GM12878 (cell line): ENCODE measurements at regions of chr18 and their contacts with region 1.

Region 1: GRCh38 chr18:27298214-27298804 is 113.2 kb upstream of the CHST9 start:
- DNase-seq: no peak
- ATAC-seq: no peak
- H3K4me3 ChIP-seq: no peak overlapping the region
- H3K27ac ChIP-seq: no peak overlapping the region
- H3K4me1 ChIP-seq: no peaks in the 10 kb centered on the region
- H3K27me3 ChIP-seq: no peaks in the 10 kb centered on the region
- CTCF ChIP-seq: peak in 1 of 3 experiments; percentile 29; a peak in 1 of 6 replicates
- EP300 ChIP-seq: no peak
- POLR2A ChIP-seq: no peak
- RAD21 ChIP-seq: peak; percentile 36

Region 2: DNA sequence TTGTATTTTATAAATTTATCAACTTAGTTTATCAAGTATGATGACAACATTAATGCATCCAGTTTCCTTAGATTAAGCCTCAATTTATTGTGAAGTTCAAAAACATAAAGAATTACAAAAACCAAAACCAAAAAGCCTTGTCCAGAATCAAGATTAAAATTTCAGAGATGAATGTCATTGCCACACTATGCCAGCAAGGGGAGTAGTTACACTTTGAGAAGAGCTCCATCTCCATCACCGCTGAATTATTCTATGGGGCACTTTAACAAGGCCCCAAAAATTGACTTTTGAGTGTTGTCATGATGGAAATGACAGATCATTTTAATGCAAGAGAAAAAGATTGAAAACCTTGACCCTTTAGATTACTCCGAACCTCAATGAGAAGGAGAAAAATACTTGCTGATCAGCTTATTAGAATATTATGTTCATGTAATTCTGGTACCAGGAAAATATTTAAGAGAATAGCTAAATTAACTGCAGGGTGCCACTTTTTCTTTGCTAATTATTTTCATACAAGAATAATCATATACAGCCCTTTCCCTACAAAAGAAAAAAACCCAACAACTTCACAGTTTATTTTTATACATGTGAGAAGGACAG is 280.3 kb before region 1 on chr18:
- CTCF ChIA-PET with region 1: interaction called, 7 read pairs
- POLR2A ChIA-PET with region 1: no interaction called
- RAD21 ChIA-PET with region 1: interaction called, 6 read pairs
- SMC1A ChIA-PET with region 1: interaction called, 3 read pairs
- in situ Hi-C with region 1: no loop called
- intact Hi-C with region 1: loop called (anchors 5 kb)
- DNase-seq: no peak
- ATAC-seq: peak; percentile 66
- H3K4me3 ChIP-seq: no peak overlapping the region
- H3K27ac ChIP-seq: no peak overlapping the region
- H3K4me1 ChIP-seq: no peaks in the 10 kb centered on the region
- H3K27me3 ChIP-seq: no peaks in the 10 kb centered on the region
- CTCF ChIP-seq: peak; percentile 47 to 54 (median 54); a peak in 5 of 6 replicates
- EP300 ChIP-seq: no peak
- POLR2A ChIP-seq: no peak
- RAD21 ChIP-seq: peak; percentile 82